Lower leg skin (tissue), 4 donors: ENCODE measurements at regions of chr1 and their contacts with region 1.

Region 1: DNA sequence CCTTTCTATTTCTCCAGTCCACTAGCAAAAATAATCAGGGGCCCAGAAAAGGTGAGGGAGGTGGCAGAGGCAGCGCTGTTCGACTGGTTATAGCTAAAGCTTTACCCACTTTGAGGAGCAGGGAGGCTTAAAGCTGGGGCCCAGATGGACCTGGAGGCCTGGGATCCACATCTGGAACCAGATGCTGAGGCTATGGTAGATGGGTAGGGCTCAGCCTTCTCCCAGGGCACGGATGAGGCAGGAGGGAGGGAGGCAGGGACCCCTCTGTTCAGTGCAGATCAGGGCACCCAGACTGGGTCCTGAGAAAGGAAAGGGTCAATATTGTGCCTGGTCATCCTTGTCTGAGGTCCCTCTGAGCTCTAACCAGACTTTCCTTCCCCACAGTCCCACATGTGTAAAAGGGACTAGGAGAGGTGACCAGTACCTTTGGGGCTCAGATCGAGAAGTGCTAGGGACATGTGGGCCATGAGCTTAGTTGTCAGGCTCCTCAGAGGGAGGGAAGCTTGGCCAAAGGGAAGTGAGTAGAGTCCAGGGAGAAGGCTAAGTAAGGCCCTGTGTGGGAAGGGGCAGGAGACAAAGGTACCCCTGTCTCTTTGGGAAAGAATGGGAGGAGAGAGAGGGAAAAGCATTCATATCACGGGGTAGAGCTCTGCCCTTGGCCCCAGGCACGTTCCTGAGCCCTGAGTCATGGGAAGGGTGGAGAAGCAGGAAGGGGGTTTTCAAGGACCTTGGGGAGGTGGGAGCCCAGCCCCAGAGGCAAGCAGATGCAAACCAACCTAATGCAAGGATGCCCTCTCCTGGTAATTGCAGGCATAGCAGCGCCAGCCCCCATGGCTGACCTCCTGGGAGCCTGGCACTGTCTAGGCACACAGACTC is 15.4 kb downstream of the LMNA start:
- DNase-seq: peak; percentile 92 to 97
- H3K4me3 ChIP-seq: no peak overlapping the region
- CTCF ChIP-seq: peak in 2 of 3 donors; percentile 85 to 97
- POLR2A ChIP-seq: no peak

Region 2: DNA sequence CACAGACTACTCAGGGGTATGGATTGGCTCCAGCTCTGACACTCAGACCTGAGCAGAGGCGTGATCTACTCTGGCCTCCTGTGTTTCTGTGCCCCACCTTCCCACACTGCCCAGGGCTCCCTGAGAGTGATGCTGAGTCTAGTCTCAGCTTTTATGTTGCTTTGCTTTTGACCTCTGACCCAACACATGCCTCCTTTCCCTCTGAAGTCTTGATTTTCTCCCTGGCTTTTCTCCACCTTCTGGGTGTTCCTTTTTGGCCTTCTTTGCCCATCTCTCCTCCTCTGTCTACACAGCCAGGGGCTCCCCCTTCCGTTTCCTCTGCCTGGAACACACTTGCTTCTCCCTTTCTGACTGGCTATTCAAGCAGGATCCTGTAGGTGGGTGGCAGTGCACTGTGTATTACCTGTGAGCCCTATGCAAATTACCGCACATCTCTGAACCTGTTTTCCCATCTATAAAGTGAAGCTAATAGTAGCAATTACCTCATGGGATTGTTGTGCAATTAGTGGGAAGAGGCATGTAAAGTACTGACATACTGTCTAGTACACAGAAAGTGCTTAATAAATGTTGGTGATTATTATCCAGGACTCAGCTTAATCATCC is 33.9 kb before region 1 on chr1:
- intact Hi-C with region 1: loop called (anchors 2 kb)
- DNase-seq: no peak
- H3K4me3 ChIP-seq: no peak overlapping the region
- CTCF ChIP-seq: no peak
- POLR2A ChIP-seq: no peak

Region 3: GRCh38 chr1:156319664-156320063 is 189.7 kb after region 1 on chr1:
- intact Hi-C with region 1: loop called (anchors 10 kb)
- DNase-seq: no peak
- H3K4me3 ChIP-seq: no peak overlapping the region
- CTCF ChIP-seq: no peak
- POLR2A ChIP-seq: no peak

Region 4: GRCh38 chr1:156338180-156338973 is 208.4 kb after region 1 on chr1 and contains the starts of genes CCT3 and TSACC:
- intact Hi-C with region 1: no loop called
- DNase-seq: peak; percentile 99 to 100
- H3K4me3 ChIP-seq: peak within 1 kb of the TSS; percentile 65
- CTCF ChIP-seq: no peak
- POLR2A ChIP-seq: no peak
- total RNA-seq, gene CCT3: 119 to 202 (median 150) TPM
- total RNA-seq, gene TSACC: 3.2 TPM in 1 of 4 donors, not detected in the others